PC-3 (cell line): ENCODE measurements at regions of chr15 and their contacts with region 1.

Region 1: DNA sequence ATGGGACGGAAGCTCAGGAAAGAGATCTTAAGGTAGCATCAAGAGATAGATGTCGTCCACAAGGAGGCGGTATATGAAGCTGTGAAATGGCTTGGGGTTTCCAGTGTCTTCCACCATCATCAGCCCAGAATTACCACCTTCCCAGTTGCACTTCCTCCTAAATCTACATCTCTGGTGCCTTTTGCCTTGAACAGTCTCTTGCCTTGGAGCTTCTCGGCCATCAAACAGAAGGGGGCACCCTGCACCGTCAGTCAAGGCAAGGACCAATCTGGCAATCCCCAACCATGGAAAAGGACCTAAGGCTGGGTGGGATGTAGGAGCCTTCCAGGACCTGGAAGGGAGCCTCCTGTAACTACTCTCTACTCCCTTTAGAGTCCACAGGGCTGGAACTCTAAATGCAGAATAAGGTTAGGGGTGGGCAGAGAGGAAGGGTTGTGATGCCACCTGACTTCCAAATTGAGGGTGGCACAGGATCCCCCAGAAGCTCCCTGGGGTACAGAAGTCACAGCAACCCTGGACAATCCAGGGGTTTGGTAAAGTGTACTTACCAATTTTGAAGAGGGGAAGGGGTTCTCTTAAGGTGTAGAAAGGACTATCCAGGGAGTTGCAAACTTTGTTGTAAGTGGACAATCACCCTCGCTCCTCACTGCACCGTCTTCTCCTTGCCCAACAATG is 1.0 kb upstream of the RYR3 start:
- DNase-seq: peak; percentile 11
- ATAC-seq: no peak
- H3K4me3 ChIP-seq: no peak overlapping the region
- H3K27ac ChIP-seq: no peak overlapping the region
- H3K4me1 ChIP-seq: no peaks in the 10 kb centered on the region
- H3K27me3 ChIP-seq: peaks cover 91% of the 10 kb centered on the region
- CTCF ChIP-seq: peak; percentile 49; the same call in 1 of the 2 replicates

Region 2: DNA sequence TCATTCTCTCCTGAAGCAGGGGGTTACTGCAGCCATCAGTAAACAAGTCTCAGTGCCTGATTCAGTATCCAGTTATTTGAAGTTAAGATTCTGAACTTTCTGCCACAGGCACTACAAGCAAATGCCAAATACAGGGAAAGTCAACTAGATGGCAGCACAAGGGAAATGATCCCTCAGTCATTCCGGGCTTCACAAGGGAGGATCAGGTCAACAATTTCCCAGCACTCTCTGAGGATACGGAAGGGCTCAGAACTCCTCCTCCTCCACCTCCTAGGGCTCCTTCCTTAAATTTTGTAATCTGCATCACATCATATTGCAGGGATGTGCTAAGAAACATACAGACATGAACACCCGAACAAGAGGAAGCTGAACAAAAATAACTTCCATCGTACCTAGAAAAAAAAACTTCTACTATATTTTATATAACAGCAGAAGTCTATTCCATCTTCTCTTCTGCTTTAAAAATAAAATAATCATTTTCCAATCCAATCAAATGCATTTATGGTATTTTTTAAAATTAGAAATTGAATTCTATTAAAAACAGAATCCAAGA is 302.4 kb before region 1 on chr15:
- CTCF ChIA-PET with region 1: no interaction called
- POLR2A ChIA-PET with region 1: no interaction called
- intact Hi-C with region 1: no loop called
- DNase-seq: peak; percentile 76
- ATAC-seq: peak; percentile 93
- H3K4me3 ChIP-seq: no peak overlapping the region
- H3K27ac ChIP-seq: no peak overlapping the region
- H3K4me1 ChIP-seq: peaks cover 15% of the 10 kb centered on the region
- H3K27me3 ChIP-seq: no peaks in the 10 kb centered on the region
- CTCF ChIP-seq: peak; percentile 70

Region 3: DNA sequence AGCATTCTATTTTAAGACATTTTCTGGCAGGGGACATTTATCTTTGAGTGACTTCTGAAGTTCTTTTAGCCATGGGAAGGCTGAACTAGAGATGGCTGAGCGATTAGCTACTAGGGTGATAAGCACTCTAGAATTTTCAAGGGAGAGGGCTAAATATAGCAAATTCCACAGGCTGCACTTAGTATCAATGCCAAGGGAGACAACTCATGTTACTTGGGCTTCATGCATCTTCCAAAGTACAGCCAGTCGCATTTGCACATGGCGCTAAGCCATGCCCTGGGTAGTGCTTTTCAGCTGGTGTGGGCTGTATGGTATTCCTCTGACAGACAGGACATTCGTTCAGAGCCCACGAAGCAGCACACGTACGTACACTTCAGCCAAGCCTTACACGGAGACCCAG is 70.7 kb after region 1 on chr15:
- CTCF ChIA-PET with region 1: no interaction called
- POLR2A ChIA-PET with region 1: no interaction called
- intact Hi-C with region 1: loop called (anchors 10 kb)
- DNase-seq: no peak
- ATAC-seq: no peak
- H3K4me3 ChIP-seq: no peak overlapping the region
- H3K27ac ChIP-seq: no peak overlapping the region
- H3K4me1 ChIP-seq: no peaks in the 10 kb centered on the region
- H3K27me3 ChIP-seq: peaks cover 63% of the 10 kb centered on the region
- CTCF ChIP-seq: no peak

Region 4: GRCh38 chr15:33492434-33493052 is 182.8 kb after region 1 on chr15:
- CTCF ChIA-PET with region 1: no interaction called
- POLR2A ChIA-PET with region 1: no interaction called
- intact Hi-C with region 1: no loop called
- DNase-seq: no peak
- ATAC-seq: no peak
- H3K4me3 ChIP-seq: no peak overlapping the region
- H3K27ac ChIP-seq: no peak overlapping the region
- H3K4me1 ChIP-seq: no peaks in the 10 kb centered on the region
- H3K27me3 ChIP-seq: peaks cover 89% of the 10 kb centered on the region
- CTCF ChIP-seq: no peak